ENCODE measurements at regions of chr9 and their contacts with region 1.

Region 1: DNA sequence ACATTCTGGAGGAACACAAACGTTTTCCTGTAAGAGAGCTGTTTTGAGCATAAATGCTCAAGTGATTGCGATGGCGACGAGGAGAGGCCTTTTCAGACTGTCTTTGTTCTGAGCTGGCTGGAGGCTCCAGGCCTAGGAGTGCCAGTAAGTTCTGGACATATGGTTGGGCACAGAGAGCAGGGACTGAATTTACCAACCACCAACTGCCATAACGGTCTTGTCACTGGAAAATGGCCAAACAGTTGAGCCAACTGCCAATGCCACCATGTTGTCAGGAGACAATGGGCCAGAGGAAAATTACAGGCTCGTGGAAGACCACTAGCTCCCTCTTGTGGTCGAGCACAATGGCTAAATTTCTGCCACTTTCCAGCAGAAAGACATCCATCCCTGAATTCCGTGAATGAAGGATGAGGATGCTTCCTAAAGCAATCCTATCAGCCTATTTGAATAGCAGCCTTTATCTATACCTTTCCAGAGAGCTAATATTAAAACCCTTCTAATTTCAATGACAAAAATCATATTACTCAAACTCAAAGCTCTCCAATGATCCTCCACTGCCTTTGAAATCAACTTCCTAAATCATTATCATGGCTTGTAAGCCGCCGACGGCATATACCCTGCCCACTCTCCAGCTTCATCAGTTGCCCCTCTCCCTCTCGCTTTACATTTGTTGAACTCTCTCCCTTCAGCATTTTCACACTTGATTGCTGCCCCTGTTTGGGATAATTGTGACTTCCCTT is 66.9 kb upstream of the GLIS3 start:
- DNase-seq: peak; percentile 53 to 74
- ATAC-seq: peak; percentile 77 to 86
- H3K4me3 ChIP-seq: no peak overlapping the region
- H3K27ac ChIP-seq: peak overlapping the region in 1 of 2 experiments; percentile 49; a peak in 2 of 6 replicates
- H3K4me1 ChIP-seq: no peaks in the 10 kb centered on the region
- CTCF ChIP-seq: peak; percentile 92
- EP300 ChIP-seq: no peak
- POLR2A ChIP-seq: no peak
- RAD21 ChIP-seq: peak; percentile 94 to 97

Region 2: GRCh38 chr9:2857564-2858198 is 1509.1 kb before region 1 on chr9:
- CTCF ChIA-PET with region 1: interaction called, 21 read pairs
- POLR2A ChIA-PET with region 1: no interaction called
- DNase-seq: peak; percentile 70 to 71
- ATAC-seq: peak; percentile 91 to 95
- H3K4me3 ChIP-seq: no peak overlapping the region
- H3K27ac ChIP-seq: no peak overlapping the region
- H3K4me1 ChIP-seq: no peaks in the 10 kb centered on the region
- CTCF ChIP-seq: peak; percentile 91
- EP300 ChIP-seq: no peak
- POLR2A ChIP-seq: no peak
- RAD21 ChIP-seq: peak; percentile 80 to 82

Region 3: GRCh38 chr9:3240656-3241268 is 1126.0 kb before region 1 on chr9:
- CTCF ChIA-PET with region 1: interaction called, 19 read pairs
- POLR2A ChIA-PET with region 1: no interaction called
- DNase-seq: peak; percentile 49 to 72
- ATAC-seq: peak; percentile 98 to 100
- H3K4me3 ChIP-seq: no peak overlapping the region
- H3K27ac ChIP-seq: no peak overlapping the region
- H3K4me1 ChIP-seq: no peaks in the 10 kb centered on the region
- CTCF ChIP-seq: peak; percentile 83
- EP300 ChIP-seq: no peak
- POLR2A ChIP-seq: no peak
- RAD21 ChIP-seq: peak; percentile 78 to 80

Region 4: DNA sequence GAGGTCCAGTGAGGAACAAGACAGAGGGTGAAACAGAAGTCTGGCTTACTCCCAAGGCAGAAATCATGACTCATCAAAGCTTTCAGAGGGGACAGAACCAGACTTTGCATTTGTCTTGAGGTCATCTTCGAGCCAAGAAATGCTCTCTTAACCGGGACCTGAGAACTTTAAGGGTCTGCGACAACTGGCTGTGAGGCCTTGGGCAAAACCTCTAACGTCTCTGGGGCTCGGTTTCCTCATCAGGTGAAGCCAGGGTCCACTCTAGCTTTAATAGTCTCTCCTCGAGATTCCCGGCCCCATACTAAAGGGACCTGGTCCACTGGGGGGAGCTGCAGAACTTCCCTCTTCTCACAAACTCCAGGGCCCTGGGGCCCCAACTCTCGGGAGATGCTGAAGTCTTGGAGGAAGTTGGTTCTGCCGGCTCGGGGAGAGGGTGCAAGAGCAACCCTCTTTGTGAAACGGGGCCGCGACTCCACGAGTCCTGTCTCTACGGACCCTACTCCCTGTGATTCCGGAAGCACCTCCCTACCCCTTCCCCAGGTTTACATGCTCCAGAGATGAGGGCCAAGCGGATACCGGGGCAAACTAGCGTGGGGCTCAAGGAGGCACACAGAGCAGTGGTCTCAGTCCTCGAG is 69.5 kb before region 1 on chr9:
- CTCF ChIA-PET with region 1: interaction called, 14 read pairs
- POLR2A ChIA-PET with region 1: no interaction called
- DNase-seq: peak; percentile 87 to 92
- ATAC-seq: peak; percentile 60 to 73
- H3K4me3 ChIP-seq: peak overlapping the region; percentile 77
- H3K27ac ChIP-seq: peak overlapping the region; percentile 95 to 97
- H3K4me1 ChIP-seq: peaks cover 64% of the 10 kb centered on the region
- CTCF ChIP-seq: peak; percentile 64
- EP300 ChIP-seq: no peak
- POLR2A ChIP-seq: no peak; the same call in 1 of the 2 replicates
- RAD21 ChIP-seq: peak; percentile 60 to 65

Region 5: GRCh38 chr9:4327504-4328191 is 39.1 kb before region 1 on chr9:
- CTCF ChIA-PET with region 1: interaction called, 18 read pairs
- POLR2A ChIA-PET with region 1: no interaction called
- DNase-seq: no peak
- ATAC-seq: peak; percentile 38 to 40; a peak in 5 of 6 replicates
- H3K4me3 ChIP-seq: no peak overlapping the region
- H3K27ac ChIP-seq: no peak overlapping the region
- H3K4me1 ChIP-seq: peaks cover 7% of the 10 kb centered on the region; the same call in 1 of the 3 replicates
- CTCF ChIP-seq: no peak
- EP300 ChIP-seq: no peak
- POLR2A ChIP-seq: no peak
- RAD21 ChIP-seq: no peak

Region 6: DNA sequence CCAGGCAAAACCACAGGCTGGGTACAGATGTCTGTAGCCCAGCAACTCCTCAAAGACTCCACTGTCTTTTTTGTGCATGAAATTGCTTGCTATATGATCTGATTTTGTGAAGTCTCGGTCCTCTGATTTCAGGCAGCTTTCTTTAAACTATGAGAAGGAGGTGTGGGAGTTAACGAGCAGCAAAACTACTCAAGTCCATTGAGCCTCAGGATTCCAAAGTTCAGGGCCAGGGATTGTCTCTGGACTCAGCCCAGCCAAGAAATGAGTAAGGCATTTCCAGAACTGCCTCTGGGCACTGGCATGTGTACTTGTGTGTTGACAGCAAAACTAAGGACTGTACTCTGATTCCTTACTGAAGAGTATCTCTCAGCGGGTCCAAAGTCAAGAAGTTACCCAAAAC is 13.5 kb before region 1 on chr9:
- CTCF ChIA-PET with region 1: interaction called, 22 read pairs
- POLR2A ChIA-PET with region 1: no interaction called
- DNase-seq: no peak
- ATAC-seq: no peak
- H3K4me3 ChIP-seq: no peak overlapping the region
- H3K27ac ChIP-seq: no peak overlapping the region
- H3K4me1 ChIP-seq: no peaks in the 10 kb centered on the region
- CTCF ChIP-seq: no peak
- EP300 ChIP-seq: no peak
- POLR2A ChIP-seq: no peak
- RAD21 ChIP-seq: no peak

Measured in A549 (cell line).